ENCODE measurements at regions of chr20 and their contacts with region 1.

Region 1: DNA sequence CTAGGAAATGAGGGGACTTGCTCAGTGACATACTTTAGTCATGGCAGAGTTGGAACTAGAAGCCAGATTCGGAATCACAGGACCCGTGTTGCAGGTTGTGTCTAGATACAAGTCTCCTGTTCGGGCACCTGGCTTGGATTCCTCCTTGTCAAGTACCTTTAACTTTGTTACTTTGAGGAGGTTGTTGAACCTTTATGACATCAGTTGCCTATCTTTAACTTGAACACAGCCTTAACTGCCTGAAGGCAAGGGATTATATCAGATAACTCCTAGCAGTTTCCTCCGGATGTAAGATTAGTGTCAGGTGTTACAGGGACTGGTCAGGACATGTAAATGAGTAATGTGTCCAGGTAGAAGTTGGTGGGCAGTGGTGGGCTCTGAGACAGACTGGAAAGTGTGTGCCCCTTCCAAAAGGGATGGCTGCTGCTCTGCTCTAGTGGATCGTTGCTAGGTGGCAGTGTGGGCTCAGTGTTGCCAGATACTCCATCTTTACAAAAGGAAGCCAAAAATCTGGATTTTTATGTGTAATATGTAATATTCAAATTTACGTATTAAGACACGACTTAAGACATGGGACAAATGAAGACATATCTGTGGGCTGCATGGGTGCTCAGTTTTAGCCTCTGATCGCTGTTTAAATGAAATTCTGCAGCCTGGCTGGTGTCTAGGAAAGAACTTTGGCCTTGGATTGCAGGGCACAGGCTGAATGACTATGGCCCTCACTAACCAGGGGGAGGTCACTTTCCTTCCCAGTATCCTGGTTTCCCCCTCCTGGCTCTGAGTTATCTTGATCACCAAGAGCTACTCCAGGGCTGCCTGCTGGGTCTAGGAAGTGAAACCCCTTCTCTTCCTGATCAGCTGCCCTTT is 27.1 kb downstream of the CHMP4B start:
- DNase-seq: no peak
- H3K4me3 Mint-ChIP-seq: no peak overlapping the region
- H3K27ac Mint-ChIP-seq: peak overlapping the region; percentile 36
- H3K4me1 Mint-ChIP-seq: peaks cover 88% of the 10 kb centered on the region
- H3K27me3 Mint-ChIP-seq: no peaks in the 10 kb centered on the region
- CTCF ChIP-seq: no peak

Region 2: DNA sequence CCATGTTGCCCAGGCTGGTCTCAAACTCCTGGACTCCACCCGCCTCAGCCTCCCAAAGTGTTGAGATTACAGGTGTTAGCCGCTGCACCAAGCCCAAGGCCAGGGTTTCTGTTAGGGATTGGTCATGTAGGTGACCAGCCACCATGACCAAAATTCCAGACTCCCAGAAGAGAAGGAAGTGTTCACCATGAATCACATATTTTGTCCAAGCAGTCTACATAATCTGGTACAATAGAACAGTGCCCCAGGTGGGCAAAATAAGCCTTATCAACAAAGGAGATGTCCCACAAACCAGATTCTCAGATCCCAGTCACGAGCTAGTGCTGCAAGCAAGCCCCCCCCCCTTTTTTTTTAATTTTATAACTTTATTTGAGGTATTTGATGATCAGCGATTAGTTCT is 86.5 kb before region 1 on chr20:
- CTCF ChIA-PET with region 1: interaction called, 10 read pairs
- intact Hi-C with region 1: no loop called
- DNase-seq: no peak
- H3K4me3 Mint-ChIP-seq: no peak overlapping the region
- H3K27ac Mint-ChIP-seq: no peak overlapping the region
- H3K4me1 Mint-ChIP-seq: peaks cover 9% of the 10 kb centered on the region
- H3K27me3 Mint-ChIP-seq: no peaks in the 10 kb centered on the region
- CTCF ChIP-seq: no peak

Region 3: DNA sequence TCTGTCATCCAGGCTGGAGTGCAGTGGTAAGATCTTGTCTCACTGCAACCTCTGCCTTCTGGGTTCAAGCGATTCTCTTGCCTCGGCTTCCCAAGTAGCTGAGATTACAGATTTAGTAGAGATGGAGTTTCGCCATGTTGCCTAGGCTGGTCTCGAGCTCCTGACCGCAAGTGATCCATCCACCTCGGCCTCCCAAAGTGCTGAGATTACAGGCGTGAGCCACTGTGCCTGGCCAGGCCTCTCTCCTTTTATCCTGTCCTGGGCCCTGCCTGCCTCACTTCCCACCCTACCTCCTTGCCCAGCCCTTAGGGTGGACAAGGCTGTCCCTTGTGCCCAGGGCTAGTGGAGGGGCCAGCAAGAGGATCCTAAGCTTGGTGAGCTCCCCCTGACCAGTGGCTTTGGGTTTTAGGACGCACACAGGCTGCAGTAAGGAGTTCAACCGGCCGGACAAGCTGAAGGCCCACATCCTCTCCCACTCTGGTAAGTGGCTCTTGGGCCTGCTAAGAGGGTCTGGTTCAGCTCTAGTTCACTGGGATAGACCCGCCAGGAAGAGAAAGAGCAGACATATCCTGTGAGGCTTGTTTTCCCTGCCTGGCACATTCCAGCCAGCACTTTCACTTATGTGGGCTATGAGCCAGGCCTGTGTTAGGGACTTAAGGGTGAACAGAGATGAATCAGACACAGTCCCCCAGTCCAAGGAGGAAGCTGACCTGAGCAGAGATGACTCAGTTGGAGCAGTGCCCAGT is 48.9 kb before region 1 on chr20:
- CTCF ChIA-PET with region 1: no interaction called
- intact Hi-C with region 1: no loop called
- DNase-seq: peak; percentile 99
- H3K4me3 Mint-ChIP-seq: peak overlapping the region; percentile 42
- H3K27ac Mint-ChIP-seq: peak overlapping the region; percentile 97
- H3K4me1 Mint-ChIP-seq: peaks cover 66% of the 10 kb centered on the region
- H3K27me3 Mint-ChIP-seq: no peaks in the 10 kb centered on the region
- CTCF ChIP-seq: no peak

Region 4: GRCh38 chr20:34001378-34001777 is 163.1 kb after region 1 on chr20:
- CTCF ChIA-PET with region 1: no interaction called
- intact Hi-C with region 1: no loop called
- DNase-seq: no peak
- H3K4me3 Mint-ChIP-seq: no peak overlapping the region
- H3K27ac Mint-ChIP-seq: no peak overlapping the region
- H3K4me1 Mint-ChIP-seq: peaks cover 80% of the 10 kb centered on the region
- H3K27me3 Mint-ChIP-seq: no peaks in the 10 kb centered on the region
- CTCF ChIP-seq: no peak

Region 5: GRCh38 chr20:34037121-34037520 is 198.9 kb after region 1 on chr20:
- CTCF ChIA-PET with region 1: no interaction called
- intact Hi-C with region 1: no loop called
- DNase-seq: no peak
- H3K4me3 Mint-ChIP-seq: no peak overlapping the region
- H3K27ac Mint-ChIP-seq: no peak overlapping the region
- H3K4me1 Mint-ChIP-seq: peaks cover 25% of the 10 kb centered on the region
- H3K27me3 Mint-ChIP-seq: no peaks in the 10 kb centered on the region
- CTCF ChIP-seq: no peak